ENCODE measurements at regions of chr6 and their contacts with region 1.

Region 1: GRCh38 chr6:131909408-131910218 is 41.6 kb downstream of the CCN2 start:
- DNase-seq: peak; percentile 72
- H3K4me3 ChIP-seq: no peak overlapping the region
- H3K27ac ChIP-seq: no peak overlapping the region
- H3K4me1 ChIP-seq: peaks cover 2% of the 10 kb centered on the region; the same call in 1 of the 2 replicates
- H3K27me3 ChIP-seq: no peaks in the 10 kb centered on the region

Region 2: GRCh38 chr6:131694831-131695426 is 214.7 kb before region 1 on chr6:
- in situ Hi-C with region 1: loop called (anchors 10 kb)
- DNase-seq: peak; percentile 82
- H3K4me3 ChIP-seq: no peak overlapping the region
- H3K27ac ChIP-seq: no peak overlapping the region
- H3K4me1 ChIP-seq: no peaks in the 10 kb centered on the region
- H3K27me3 ChIP-seq: no peaks in the 10 kb centered on the region

Region 3: DNA sequence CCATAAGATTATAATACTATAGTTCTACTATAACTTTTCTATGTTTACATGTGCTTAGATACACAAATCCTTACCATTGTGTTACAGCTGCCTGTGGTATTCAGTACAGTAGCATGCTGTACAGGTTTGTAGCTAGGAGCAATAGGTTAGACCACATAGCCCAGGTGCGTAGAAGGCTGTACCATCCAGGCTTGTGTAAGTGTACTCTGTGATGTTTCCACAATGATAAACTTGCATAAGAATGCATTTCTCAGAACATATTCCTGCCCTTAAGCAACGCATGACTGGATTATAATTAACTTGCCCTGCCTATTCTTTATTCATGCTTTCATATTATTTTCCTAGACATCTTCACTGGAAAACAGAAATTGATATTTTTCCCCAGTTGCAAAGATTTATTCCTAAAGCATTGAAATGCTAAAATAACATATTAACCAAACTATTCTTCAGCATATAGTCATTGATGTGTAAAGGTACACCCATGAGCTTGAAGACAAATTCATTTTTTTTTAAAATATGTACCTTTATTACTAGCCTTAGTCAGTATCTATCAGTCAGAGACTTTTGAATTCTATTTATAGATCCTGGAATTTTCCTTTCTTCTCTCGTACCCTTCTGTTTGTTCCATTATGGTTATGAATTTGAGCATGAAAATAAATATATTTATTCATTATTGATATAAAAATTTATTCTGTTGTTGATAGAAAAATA is 191.6 kb before region 1 on chr6:
- in situ Hi-C with region 1: no loop called
- DNase-seq: no peak
- H3K4me3 ChIP-seq: no peak overlapping the region
- H3K27ac ChIP-seq: no peak overlapping the region
- H3K4me1 ChIP-seq: no peaks in the 10 kb centered on the region
- H3K27me3 ChIP-seq: no peaks in the 10 kb centered on the region

Region 4: DNA sequence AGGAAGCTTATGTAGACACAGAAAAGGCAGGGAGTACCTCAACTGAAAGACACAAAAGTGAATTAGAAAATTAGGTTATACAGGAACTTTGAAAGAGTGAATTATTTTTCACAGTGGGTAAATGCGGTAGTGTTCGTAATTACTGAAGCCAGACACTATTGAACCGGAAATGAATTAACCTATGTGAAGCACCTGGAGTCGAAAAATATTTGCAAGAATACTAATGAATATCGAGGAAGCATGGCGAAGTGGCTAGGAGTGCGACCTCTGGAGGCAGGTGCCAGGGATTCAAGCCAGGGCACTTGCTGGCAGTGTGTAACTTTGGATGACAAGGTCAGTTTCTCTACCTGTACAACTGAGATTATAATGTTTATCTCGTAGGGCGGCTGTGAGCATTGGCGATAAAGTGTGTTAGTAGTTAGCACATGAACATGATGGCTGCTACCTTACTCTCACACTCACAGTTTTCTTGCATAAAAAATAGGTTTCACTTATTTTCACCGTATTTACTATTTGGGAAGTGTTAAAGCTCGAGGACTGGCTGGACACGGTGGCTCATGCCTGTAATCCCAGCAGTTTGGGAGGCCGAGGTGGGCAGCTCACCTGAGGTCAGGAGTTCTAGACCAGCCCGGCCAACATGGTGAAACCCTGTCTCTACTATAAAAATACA is 889.4 kb after region 1 on chr6:
- in situ Hi-C with region 1: loop called (anchors 25 kb)
- DNase-seq: peak; percentile 80
- H3K4me3 ChIP-seq: peak overlapping the region; percentile 80
- H3K27ac ChIP-seq: peak overlapping the region; percentile 32; the same call in 1 of the 2 replicates
- H3K4me1 ChIP-seq: peaks cover 4% of the 10 kb centered on the region; the same call in 1 of the 2 replicates
- H3K27me3 ChIP-seq: no peaks in the 10 kb centered on the region

Measured in GM23248 (cell line).